ENCODE measurements at regions of chr1 and their contacts with region 1.

Region 1: DNA sequence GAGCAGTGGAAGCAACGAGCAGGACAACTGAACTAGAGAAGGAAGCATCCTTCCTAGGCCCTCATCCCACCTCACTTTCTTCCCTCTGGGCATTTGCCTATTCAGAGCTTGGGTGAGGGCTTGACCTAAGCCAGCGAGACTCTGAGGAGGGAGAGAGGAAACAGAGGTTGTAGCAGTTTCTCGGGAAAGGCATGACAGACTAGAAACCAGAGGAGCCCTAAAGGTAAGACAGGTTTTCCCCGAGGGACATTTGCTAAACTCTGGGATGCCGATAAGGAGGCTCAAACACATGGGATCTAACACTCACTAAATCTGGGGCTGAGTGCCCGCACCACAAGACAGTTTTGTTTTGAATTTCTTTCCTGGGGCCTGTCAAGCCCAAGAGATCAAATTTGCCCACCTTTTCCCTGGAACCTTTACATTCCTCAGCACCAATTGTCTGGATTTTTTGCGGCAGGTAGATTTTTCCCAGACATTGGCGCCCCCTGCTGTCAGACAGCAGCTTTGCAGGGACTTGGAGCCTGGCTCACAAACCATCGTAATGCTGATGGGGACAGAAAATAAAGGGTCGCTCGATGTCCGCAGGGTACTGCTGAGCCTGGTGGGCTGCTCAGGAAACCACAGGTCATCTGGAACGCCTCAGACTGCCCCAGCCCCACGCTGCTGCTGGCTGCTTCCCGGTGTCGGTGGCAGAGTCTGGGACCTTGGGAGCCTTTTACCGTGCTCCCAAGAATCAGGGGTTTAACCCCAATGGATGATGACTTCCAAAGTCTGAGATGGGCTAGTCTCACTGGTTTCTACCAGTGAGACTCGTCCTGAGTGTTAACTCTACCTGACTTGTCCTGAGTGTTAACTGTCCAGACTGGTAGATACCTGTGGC is 23.4 kb upstream of the TSPAN2 start:
- DNase-seq: peak; percentile 65
- ATAC-seq: peak; percentile 30
- H3K4me3 Mint-ChIP-seq: no peak overlapping the region
- H3K27ac Mint-ChIP-seq: no peak overlapping the region
- H3K4me1 Mint-ChIP-seq: peaks cover 10% of the 10 kb centered on the region
- H3K27me3 Mint-ChIP-seq: no peaks in the 10 kb centered on the region

Region 2: GRCh38 chr1:114979278-114979891 is 133.4 kb before region 1 on chr1:
- CTCF ChIA-PET with region 1: interaction called, 37 read pairs
- POLR2A ChIA-PET with region 1: no interaction called
- intact Hi-C with region 1: loop called (anchors 1 kb)
- DNase-seq: peak; percentile 79
- ATAC-seq: no peak
- H3K4me3 Mint-ChIP-seq: no peak overlapping the region
- H3K27ac Mint-ChIP-seq: no peak overlapping the region
- H3K4me1 Mint-ChIP-seq: no peaks in the 10 kb centered on the region
- H3K27me3 Mint-ChIP-seq: peaks cover 9% of the 10 kb centered on the region

Region 3: DNA sequence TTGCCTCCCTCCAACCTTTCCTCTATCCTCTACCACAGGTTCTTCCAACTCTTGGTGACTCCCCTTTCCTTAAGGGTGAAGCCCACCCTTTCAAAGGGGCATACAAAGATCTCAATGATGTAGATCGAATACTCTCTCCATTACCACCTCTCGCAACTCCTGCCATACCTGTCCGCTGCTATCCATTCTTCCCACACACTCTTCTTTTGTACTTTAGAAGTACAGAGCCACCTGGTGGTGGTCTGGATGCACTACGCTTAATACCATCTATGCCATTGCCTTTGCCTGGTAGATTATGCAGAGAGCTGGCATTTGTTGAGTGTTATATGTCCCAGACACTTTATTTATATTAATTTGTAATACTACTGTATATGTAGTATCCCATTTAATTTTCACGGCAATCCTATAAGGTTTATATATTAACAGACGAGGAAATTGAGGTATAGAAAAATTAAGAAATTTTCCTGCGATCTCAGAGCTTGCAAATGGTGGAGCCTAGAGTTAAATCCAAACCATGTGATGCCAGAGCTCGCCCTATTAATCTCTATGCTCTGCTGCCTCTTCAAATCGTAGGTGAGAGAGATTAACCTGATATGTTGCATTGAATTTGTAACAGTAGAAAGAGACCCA is 60.2 kb before region 1 on chr1:
- CTCF ChIA-PET with region 1: interaction called, 40 read pairs
- POLR2A ChIA-PET with region 1: no interaction called
- intact Hi-C with region 1: no loop called
- DNase-seq: peak; percentile 70
- ATAC-seq: peak; percentile 80
- H3K4me3 Mint-ChIP-seq: no peak overlapping the region
- H3K27ac Mint-ChIP-seq: no peak overlapping the region
- H3K4me1 Mint-ChIP-seq: peaks cover 3% of the 10 kb centered on the region
- H3K27me3 Mint-ChIP-seq: no peaks in the 10 kb centered on the region

Region 4: DNA sequence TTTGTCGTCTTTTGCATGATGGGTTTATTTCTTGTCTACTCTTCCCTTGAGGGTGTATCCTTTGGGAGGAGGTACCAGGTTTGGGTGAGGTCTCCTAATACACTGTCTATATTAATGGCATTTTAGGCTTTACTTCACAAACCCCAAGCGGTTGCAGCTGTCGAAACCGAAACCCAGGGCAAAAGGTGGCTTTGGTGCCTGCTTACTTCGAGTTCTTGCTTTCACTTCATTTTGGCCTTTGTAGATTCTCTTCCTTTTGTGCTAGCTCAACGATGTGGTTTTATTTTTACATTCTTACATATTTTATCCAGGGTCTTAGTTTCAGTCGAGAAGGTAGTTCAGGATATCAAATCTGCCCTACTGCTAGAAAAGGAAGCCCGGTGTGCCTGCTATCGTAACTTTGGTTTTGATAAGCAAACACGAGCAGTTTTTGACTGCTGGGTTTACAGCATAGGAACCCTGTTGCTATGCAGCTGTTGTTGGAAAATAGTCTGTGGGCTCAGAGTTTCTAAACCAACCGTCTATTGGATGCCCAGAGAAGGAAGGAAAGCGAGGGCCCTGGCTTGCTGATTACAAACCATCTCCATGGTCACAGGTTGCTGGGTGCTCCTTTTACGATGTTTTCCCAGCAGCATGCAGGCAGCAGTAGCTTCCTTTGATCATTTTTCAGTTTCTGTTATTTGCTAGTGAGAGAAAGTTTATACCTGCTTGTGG is 13.6 kb before region 1 on chr1:
- CTCF ChIA-PET with region 1: interaction called, 19 read pairs
- POLR2A ChIA-PET with region 1: no interaction called
- intact Hi-C with region 1: no loop called
- DNase-seq: peak; percentile 80
- ATAC-seq: peak; percentile 80
- H3K4me3 Mint-ChIP-seq: peak overlapping the region; percentile 75
- H3K27ac Mint-ChIP-seq: peak overlapping the region; percentile 69
- H3K4me1 Mint-ChIP-seq: peaks cover 39% of the 10 kb centered on the region
- H3K27me3 Mint-ChIP-seq: no peaks in the 10 kb centered on the region

Region 5: DNA sequence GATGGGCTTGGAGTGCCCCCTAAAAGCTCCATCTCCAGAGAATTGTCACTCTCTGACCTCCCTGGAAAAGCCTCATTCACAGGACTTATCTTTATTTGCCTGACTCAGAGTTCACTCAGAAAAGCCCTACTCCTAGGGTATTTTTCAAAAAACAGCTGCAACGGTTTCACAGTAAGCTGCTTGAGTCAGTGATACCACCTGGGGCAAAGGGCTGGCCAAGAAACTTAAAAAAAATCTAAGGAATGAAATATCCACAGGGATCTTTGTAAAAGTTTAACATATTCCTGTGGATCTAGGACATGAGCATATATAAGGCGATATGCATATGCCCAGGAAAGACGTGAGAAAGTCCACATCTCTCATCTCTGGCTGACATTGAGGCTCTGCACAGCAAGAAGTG is 10.4 kb after region 1 on chr1:
- CTCF ChIA-PET with region 1: interaction called, 10 read pairs
- POLR2A ChIA-PET with region 1: no interaction called
- intact Hi-C with region 1: no loop called
- DNase-seq: no peak
- ATAC-seq: no peak
- H3K4me3 Mint-ChIP-seq: no peak overlapping the region
- H3K27ac Mint-ChIP-seq: no peak overlapping the region
- H3K4me1 Mint-ChIP-seq: no peaks in the 10 kb centered on the region
- H3K27me3 Mint-ChIP-seq: peaks cover 14% of the 10 kb centered on the region

Region 6: DNA sequence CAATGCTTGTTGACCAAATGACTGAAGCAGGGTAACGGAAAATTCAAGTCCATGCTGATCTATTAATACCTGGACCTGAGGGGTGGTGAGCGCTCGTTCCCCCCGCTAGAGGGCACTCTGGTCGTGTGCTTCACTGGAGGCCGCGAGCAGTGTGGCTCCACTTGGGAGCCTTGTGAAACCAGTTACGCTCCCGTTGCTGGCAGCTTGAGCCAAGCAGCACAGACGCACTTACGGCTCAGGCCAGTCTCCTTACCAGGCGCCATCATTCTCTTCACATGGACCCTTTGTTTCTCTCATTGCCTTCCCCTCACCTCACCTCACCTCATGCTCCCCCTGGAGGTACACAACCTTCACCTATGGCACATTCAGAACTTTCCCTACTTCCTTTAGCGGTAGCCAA is 26.2 kb after region 1 on chr1:
- CTCF ChIA-PET with region 1: interaction called, 6 read pairs
- POLR2A ChIA-PET with region 1: no interaction called
- intact Hi-C with region 1: loop called in 1 of 2 experiments (anchors 2 kb)
- DNase-seq: peak; percentile 79
- ATAC-seq: peak; percentile 88
- H3K4me3 Mint-ChIP-seq: peak overlapping the region; percentile 11
- H3K27ac Mint-ChIP-seq: no peak overlapping the region
- H3K4me1 Mint-ChIP-seq: peaks cover 4% of the 10 kb centered on the region
- H3K27me3 Mint-ChIP-seq: peaks cover 11% of the 10 kb centered on the region